Calu3 (cell line): ENCODE measurements at regions of chr3 and their contacts with region 1.

Region 1: DNA sequence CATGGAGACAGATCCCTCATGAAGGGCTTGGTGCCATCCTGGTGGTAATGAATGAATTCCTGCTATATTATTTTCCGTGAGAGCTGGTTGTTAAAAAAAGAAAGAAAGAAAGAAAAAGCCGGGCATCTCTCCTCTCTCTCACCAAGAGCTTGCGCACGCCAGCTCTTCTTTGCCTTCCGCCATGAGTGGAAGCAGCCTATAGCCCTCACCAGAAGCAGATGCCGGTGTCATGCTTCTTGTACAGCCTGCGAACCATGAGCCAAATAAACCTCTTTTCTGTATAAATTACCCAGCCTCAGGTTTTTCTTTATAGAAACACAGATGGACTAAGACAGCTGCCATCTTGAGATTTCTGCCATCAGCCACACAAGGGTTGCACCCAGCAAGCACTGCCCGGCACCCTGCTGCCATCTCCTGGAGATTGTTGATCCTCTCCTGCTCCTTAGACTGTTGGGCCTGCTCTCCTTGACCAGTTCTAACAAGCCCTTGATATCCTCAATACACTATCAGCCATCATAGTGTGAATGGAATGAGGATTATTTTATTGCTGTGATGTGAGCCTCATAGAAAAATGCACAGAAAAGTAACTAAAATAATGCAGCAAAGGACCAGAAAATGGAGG is 3.5 kb upstream of the AHSG start:
- DNase-seq: peak; percentile 85
- H3K4me3 Mint-ChIP-seq: no peak overlapping the region
- H3K27ac Mint-ChIP-seq: no peak overlapping the region
- H3K4me1 Mint-ChIP-seq: peaks cover 61% of the 10 kb centered on the region
- H3K27me3 Mint-ChIP-seq: no peaks in the 10 kb centered on the region
- CTCF ChIP-seq: peak; percentile 48

Region 2: GRCh38 chr3:186589121-186589520 is 20.2 kb before region 1 on chr3:
- CTCF ChIA-PET with region 1: interaction called, 61 read pairs
- intact Hi-C with region 1: loop called (anchors 1 kb)
- DNase-seq: peak; percentile 44
- H3K4me3 Mint-ChIP-seq: no peak overlapping the region
- H3K27ac Mint-ChIP-seq: peak overlapping the region; percentile 64
- H3K4me1 Mint-ChIP-seq: peaks cover 45% of the 10 kb centered on the region
- H3K27me3 Mint-ChIP-seq: no peaks in the 10 kb centered on the region
- CTCF ChIP-seq: peak; percentile 63